CD14-positive monocyte (primary cell): ENCODE measurements at regions of chr5 and their contacts with region 1.

Region 1: DNA sequence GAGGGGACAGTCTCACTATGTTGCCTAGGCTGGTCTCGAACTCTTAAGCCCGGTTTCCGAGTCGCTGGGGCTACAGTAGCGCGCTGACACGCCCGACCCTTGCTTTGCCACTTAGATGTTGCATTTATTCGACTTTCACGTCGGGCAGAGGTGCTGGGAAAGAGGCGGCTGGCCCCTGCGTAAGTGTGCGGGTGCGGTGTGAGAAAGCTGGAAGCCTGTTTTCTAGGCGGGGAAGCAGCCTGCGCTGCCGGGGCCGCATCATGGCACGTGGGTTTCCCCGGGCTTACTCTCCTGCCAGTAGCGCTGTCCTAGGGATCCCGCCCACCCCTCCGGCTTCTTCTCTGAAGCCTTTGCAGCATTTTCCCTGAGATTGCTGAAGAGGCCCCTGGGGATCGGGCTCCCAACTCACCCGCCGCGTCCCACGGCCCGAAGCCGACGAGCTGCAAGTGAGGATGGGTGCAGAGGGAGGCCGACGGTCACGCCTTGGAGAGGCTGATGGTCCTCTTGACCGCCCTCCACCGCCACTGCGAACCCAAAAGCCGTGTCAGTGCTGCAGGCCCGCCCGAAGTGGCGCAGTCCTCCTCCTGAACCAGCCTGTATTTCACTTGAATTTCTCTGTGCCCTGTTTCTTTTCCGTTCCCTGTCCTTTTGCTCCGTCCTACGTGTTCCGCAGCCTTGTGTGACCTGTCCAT is 5.8 kb upstream of the TRIM41 start:
- DNase-seq: peak in 2 of 3 donors; percentile 27 to 37
- H3K4me3 ChIP-seq: peak overlapping the region; percentile 0 to 70 (median 22)
- H3K4me3 Mint-ChIP-seq: peak overlapping the region; percentile 70 to 90
- H3K27ac ChIP-seq: no peak overlapping the region
- H3K27ac Mint-ChIP-seq: peak overlapping the region in 2 of 7 donors; percentile 50 to 79
- H3K4me1 ChIP-seq: peaks cover 39 to 40% of the 10 kb centered on the region in 2 donors
- H3K4me1 Mint-ChIP-seq: peaks cover 40% of the 10 kb centered on the region
- H3K27me3 ChIP-seq: peaks cover 13 to 42% of the 10 kb centered on the region in 2 donors
- H3K27me3 Mint-ChIP-seq: peaks cover 28 to 43% (median 33%) of the 10 kb centered on the region in 3 donors
- CTCF ChIP-seq: no peak

Region 2: DNA sequence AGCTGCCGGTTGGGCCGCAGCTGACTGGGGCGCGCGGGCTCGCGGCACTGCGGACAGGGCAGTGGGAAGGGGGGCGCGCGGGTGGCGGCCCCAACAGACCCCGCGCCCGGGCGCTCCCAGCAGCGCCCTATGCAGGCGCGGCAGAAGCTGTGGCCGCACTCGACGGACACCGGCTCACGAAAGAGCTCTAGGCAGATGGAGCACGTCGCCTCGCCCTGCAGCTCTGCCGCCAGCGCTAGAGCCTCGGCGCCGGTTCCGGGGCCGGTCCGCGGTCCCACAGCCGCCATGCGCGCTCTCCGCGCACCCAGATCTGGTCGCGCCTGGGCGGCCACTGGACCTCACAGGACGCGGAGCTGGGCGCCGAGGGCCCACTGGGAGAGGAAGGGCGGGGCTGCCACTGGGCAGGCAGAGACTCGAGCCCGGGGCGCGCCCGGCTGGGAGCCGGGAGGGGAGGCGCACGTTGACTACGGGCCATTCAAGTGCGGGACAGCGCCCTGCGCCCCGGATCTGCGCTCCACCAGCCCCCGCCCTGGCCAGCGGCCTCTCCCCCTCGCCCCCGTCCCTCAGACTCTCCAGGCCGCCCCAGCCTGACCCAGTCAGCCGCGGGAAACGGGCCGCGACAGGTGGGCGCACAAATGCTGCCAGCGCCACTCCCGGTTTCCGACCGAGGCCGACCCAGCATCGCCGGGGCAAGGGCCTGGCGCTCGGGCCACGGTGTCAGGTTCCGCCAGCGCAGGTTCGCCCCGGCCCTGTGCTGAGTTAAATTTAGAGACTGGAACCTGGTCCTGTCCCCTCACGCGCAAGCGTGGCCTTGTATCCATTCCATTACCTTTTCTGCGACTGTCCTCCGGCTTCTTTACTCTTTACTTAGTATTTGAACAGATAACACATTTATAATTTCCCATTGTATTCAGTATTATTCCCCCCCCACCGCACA is 12.2 kb before region 1 on chr5 and contains the start of gene TRIM7:
- intact Hi-C with region 1: loop called in 1 of 2 experiments (anchors 2 kb)
- DNase-seq: peak in 2 of 3 donors; percentile 28 to 30
- H3K4me3 ChIP-seq: peak within 1 kb of the TSS; percentile 50 to 81 (median 56)
- H3K4me3 Mint-ChIP-seq: peak within 1 kb of the TSS; percentile 92 to 99
- H3K27ac ChIP-seq: peak within 1 kb of the TSS; percentile 68 to 75
- H3K27ac Mint-ChIP-seq: peak within 1 kb of the TSS in 6 of 7 donors; percentile 21 to 94 (median 83)
- H3K4me1 ChIP-seq: peaks cover 58 to 72% of the 10 kb centered on the region in 2 donors
- H3K4me1 Mint-ChIP-seq: peaks cover 63% of the 10 kb centered on the region
- H3K27me3 ChIP-seq: peaks cover 6 to 27% of the 10 kb centered on the region in 2 donors
- H3K27me3 Mint-ChIP-seq: peaks cover 25 to 36% (median 27%) of the 10 kb centered on the region in 3 donors
- CTCF ChIP-seq: no peak
- polyA plus RNA-seq, gene TRIM7: 9.5 to 12.8 (median 10.3) TPM